Heart right ventricle (tissue), 16 donors: ENCODE measurements at regions of chr1 and their contacts with region 1.

Region 1: GRCh38 chr1:220099826-220100225 is 5.9 kb downstream of the IARS2 start:
- DNase-seq: no peak
- ATAC-seq: no peak
- H3K4me3 ChIP-seq: no peak overlapping the region
- H3K27ac ChIP-seq: peak overlapping the region in 2 of 10 donors; percentile 9 to 10
- H3K4me1 ChIP-seq: peaks cover 0 to 23% (median 14%) of the 10 kb centered on the region in 9 donors
- H3K27me3 ChIP-seq: no peaks in the 10 kb centered on the region
- CTCF ChIP-seq: no peak

Region 2: DNA sequence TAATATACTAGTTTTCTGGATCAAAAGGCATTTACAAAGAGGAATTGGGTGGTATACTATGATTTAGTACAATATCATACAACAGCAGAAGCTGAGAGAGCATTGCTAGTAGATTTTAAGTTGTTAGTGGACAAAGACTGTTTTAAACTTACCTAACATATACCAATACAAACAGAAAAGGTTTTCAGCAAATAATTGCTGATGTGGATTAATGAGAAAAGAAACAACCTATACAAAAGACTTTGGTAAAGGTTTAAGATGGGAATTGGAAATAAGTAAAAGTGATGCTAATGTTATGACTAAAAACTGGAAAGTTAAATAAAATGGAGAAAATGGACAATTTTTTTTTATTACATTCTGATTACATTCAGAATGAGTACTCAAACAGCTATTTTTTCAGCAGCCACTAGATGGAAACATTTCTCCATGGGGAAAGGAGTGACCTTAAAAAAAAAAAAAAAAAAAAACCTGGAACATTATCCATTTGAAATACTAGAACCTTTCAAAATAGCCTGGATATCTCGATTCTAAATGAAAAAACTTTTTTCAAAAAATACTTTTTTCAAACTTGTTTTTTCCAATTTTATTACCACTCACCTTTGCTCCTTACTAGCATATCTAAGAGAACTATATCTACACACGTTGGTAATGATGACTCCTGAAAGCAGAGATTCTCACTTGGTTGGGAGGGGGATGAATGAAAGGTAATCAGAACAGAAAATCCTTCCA is 108.9 kb before region 1 on chr1:
- intact Hi-C with region 1: loop called in 1 of 10 experiments (anchors 10 kb)
- DNase-seq: no peak
- ATAC-seq: no peak
- H3K4me3 ChIP-seq: no peak overlapping the region
- H3K27ac ChIP-seq: no peak overlapping the region
- H3K4me1 ChIP-seq: peaks cover 0 to 4% (median 0%) of the 10 kb centered on the region in 9 donors
- H3K27me3 ChIP-seq: no peaks in the 10 kb centered on the region
- CTCF ChIP-seq: peak in 8 of 9 donors; percentile 36 to 77 (median 61)

Region 3: GRCh38 chr1:220170836-220171526 is 71.2 kb after region 1 on chr1:
- intact Hi-C with region 1: loop called in 1 of 10 experiments (anchors 10 kb)
- DNase-seq: no peak
- ATAC-seq: no peak
- H3K4me3 ChIP-seq: no peak overlapping the region
- H3K27ac ChIP-seq: no peak overlapping the region
- H3K4me1 ChIP-seq: no peaks in the 10 kb centered on the region
- H3K27me3 ChIP-seq: no peaks in the 10 kb centered on the region
- CTCF ChIP-seq: no peak

Region 4: DNA sequence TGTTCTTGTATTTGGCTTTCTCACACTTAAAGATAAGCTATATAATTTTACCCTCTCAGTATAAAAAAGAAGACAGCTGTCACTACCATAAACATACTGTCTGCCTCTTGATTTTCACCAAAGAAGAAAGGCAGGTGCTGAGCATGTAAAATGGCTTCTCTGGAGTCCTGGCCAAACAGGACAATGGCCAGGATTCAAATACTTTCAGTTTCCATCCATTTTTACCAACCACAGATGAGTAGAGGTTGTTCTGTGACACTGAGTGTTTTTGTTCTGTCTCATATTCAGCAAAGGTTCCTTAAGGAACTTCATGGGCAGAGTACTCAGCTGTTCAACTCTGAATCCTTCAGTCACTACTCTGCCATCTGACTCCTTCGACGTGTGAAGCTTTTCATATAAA is 201.8 kb after region 1 on chr1:
- intact Hi-C with region 1: no loop called
- DNase-seq: no peak
- ATAC-seq: no peak
- H3K4me3 ChIP-seq: no peak overlapping the region
- H3K27ac ChIP-seq: no peak overlapping the region
- H3K4me1 ChIP-seq: peaks cover 0 to 22% (median 14%) of the 10 kb centered on the region in 9 donors
- H3K27me3 ChIP-seq: no peaks in the 10 kb centered on the region
- CTCF ChIP-seq: no peak

Region 5: DNA sequence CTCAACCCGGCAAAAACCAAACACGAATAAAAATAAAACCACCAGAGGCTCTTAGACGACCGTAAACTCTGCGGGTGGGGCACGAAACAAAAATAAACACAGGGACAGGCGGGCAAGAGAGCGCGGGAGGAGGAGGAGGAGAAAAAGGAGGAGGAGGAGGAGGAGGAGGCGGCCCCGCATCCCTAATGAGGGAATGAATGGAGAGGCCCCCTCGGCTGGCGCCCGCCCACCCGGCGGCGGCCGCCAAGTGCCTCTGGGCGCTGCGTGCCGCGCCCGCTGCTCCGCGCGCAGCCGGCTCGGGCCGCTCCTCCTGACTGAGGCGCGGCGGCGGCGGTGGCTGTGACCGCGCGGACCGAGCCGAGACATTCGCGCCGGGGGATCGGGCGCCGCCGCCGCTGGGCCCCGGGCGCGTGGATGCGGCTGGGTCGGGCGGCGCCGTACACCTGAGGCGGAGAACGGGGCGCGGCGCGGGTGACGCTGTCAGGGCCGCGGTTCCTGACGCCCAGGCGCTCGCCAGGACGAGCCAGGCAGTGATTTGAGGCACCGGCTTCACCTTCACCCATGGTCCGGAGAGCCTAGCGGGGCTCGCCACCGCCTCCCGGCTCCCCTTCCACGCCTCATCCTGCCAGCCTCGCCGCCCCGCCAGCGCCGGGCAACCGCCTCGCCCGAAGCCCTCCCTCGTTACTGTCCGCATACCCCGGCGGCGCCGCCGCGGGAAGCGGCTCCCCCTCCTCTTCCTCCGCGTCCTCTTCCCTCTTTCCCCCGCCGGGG is 428.3 kb after region 1 on chr1 and contains the start of gene MARK1:
- intact Hi-C with region 1: loop called in 1 of 10 experiments (anchors 10 kb)
- DNase-seq: peak; percentile 82 to 83
- ATAC-seq: peak; percentile 91 to 94 (median 93)
- H3K4me3 ChIP-seq: peak within 1 kb of the TSS; percentile 71 to 95 (median 84)
- H3K27ac ChIP-seq: peak within 1 kb of the TSS; percentile 84 to 95 (median 93)
- H3K4me1 ChIP-seq: peaks cover 0 to 29% (median 11%) of the 10 kb centered on the region in 9 donors
- H3K27me3 ChIP-seq: peaks cover 0 to 67% (median 5%) of the 10 kb centered on the region in 7 donors
- CTCF ChIP-seq: no peak
- total RNA-seq, gene MARK1: 11.3 to 19.0 (median 15.5) TPM